AG04449 (cell line): ENCODE measurements at regions of chr4 and their contacts with region 1.

Region 1: DNA sequence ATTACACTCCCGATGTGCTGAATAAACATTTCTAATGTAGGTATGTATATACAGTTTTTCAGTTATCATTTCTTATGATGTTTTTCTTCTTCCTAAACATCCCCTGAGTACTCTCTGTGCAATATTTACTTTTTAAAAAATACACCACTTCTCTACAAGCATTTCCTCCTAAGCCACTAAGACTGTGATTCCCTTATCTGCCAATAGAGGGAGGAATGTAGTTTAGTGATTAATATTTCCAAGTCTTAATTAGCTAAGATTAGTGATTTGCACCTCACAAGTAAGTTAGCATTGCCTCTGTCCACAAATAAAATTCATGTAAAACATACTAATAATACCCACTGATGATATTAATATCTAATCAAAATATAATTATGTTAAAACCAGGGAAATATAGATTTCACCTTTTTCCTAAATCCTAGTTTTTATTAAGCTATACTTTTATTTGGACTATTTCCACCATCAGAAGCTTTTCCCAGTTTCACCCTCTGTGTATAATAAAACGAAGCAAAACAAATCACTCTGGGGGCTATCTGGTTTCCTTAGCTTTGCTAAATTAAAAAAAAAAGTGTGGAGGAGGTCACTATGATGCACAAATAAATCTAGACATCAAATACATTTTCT is 909.1 kb downstream of the FAT4 start:
- DNase-seq: no peak
- H3K4me3 ChIP-seq: no peak overlapping the region
- CTCF ChIP-seq: peak; percentile 60

Region 2: GRCh38 chr4:126238013-126238412 is 14.1 kb after region 1 on chr4:
- CTCF ChIA-PET with region 1: interaction called, 26 read pairs
- POLR2A ChIA-PET with region 1: no interaction called
- DNase-seq: no peak
- H3K4me3 ChIP-seq: no peak overlapping the region
- CTCF ChIP-seq: no peak

Region 3: GRCh38 chr4:126560794-126561193 is 336.9 kb after region 1 on chr4:
- CTCF ChIA-PET with region 1: no interaction called
- POLR2A ChIA-PET with region 1: no interaction called
- DNase-seq: no peak
- H3K4me3 ChIP-seq: no peak overlapping the region
- CTCF ChIP-seq: no peak

Region 4: GRCh38 chr4:126604268-126604867 is 380.5 kb after region 1 on chr4:
- CTCF ChIA-PET with region 1: interaction called, 10 read pairs
- POLR2A ChIA-PET with region 1: no interaction called
- DNase-seq: no peak
- H3K4me3 ChIP-seq: no peak overlapping the region
- CTCF ChIP-seq: peak; percentile 59

Region 5: DNA sequence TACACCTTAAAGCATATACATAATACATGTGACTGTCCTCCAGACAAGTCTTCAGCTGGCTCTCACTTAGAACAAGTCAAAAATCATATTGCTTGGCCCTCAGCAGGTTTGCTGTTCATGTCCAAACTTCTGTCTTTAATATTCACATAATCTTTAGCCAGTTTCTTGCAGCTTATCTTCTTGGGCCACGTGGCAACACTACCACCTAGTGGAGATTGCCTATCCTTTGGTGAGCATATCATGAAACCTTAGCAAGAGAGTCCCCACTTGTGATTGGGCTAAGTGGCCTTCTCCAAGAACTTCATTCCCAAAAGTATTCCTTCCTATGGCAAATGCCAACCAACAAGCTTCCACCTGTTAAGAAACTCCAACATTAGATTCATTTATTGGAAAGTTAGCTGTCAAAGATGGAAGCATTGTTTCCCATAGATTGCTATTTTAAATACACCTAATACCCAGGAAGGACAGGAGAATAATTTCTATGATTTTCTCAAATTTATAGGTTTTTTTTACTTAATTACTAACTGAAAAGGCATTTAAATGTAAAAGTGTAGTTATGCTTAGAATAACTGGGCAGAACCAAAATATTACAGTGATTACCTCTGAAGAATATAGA is 1176.9 kb after region 1 on chr4:
- CTCF ChIA-PET with region 1: interaction called, 12 read pairs
- POLR2A ChIA-PET with region 1: no interaction called
- DNase-seq: peak; percentile 38
- H3K4me3 ChIP-seq: no peak overlapping the region
- CTCF ChIP-seq: peak; percentile 78